ENCODE measurements at regions of chr16 and their contacts with region 1.

Region 1: DNA sequence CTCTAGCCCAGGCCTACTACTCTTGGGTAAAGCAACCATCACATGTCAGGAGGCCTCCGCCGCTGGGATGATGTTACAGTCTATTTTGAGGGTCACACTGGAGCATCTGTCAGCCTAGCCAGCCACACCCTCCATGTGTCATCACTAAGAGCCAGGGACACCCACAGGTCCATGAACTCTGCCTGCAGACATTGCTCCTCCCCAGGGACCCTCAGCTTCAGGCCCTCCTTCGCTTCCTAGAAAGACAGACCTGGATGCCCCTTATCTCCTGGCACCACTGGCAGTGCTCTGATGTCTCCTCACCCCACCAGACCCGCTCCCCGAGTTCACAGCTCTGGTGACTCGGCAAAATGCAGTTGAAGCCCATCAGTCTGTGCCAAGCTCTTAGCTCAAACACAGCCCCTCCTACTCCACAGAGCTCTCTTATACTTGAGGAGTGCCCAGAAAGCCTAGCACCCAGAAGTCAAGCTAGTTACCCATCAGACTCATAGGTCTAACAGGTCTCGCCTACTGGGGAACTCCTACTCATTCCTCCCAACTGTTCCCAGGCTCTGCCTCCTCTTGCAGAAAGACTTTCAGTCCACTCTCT is 5.9 kb downstream of the RANBP10 start:
- DNase-seq: no peak
- H3K4me3 ChIP-seq: no peak overlapping the region
- H3K27ac ChIP-seq: peak overlapping the region; percentile 76
- H3K4me1 ChIP-seq: peaks cover 54% of the 10 kb centered on the region
- CTCF ChIP-seq: no peak

Region 2: GRCh38 chr16:67719048-67719777 is 81.2 kb before region 1 on chr16 and contains the start of gene GFOD2:
- CTCF ChIA-PET with region 1: no interaction called
- POLR2A ChIA-PET with region 1: interaction called, 10 read pairs
- intact Hi-C with region 1: no loop called
- DNase-seq: peak; percentile 95
- H3K4me3 ChIP-seq: peak within 1 kb of the TSS; percentile 76
- H3K27ac ChIP-seq: peak within 1 kb of the TSS; percentile 63
- H3K4me1 ChIP-seq: peaks cover 37% of the 10 kb centered on the region
- CTCF ChIP-seq: no peak
- total RNA-seq, gene GFOD2: 13.2 and 16.2 TPM in 2 replicates

Measured in OCI-LY7 (cell line).